B cell (primary cell): ENCODE measurements at regions of chr4 and their contacts with region 1.

Region 1: DNA sequence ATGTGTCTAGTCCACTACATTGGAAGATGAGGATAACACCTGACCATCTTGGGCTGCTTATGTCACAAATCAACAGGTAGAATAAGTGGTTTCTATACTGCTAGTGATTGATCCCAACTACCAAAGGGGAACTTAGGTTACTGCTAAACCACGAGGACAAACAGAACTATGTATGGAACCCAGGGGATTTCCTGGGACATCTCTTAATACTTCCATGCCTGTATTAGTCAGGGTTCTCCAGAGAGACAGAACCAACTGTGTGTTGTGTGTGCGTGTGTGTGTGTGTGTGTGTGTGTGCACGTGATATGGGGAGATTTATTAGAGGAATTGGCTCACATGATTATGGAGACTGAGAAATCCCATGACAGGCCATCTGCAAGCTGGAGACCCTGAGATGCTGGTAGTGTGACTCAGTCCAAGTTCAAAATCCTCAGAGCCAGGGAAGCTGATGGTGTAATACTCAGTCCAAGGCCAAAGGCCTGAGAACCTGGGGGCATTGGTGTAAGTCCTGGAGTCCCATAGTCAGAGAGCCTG is 16.2 kb upstream of the AFF1 start:
- DNase-seq: no peak
- ATAC-seq: no peak
- H3K4me3 ChIP-seq: no peak overlapping the region
- H3K4me3 Mint-ChIP-seq: no peak overlapping the region
- H3K27ac ChIP-seq: no peak overlapping the region
- H3K27ac Mint-ChIP-seq: no peak overlapping the region
- H3K4me1 ChIP-seq: peaks cover 0 to 2% of the 10 kb centered on the region in 2 donors
- H3K4me1 Mint-ChIP-seq: no peaks in the 10 kb centered on the region
- H3K27me3 ChIP-seq: no peaks in the 10 kb centered on the region
- H3K27me3 Mint-ChIP-seq: no peaks in the 10 kb centered on the region
- CTCF ChIP-seq: no peak

Region 2: DNA sequence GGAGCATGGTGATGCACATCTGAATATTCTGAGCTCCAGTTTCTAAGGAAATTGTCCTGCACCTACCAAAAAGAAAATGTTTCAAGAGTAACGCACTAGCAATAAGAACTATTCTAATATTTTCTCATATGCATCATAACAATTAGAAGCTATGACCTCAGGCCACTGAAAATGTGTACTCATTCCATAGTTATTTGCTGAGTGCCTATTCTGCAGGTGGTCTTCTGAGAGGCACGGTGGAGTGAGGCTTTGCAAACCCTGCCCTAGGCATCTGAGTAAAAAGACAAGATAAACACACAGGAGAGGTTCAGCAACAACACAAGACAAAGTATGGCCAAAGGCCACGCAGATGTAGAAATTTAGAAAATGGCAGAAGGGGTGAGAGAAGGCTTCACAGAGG is 93.1 kb before region 1 on chr4:
- CTCF ChIA-PET with region 1: no interaction called
- POLR2A ChIA-PET with region 1: no interaction called
- intact Hi-C with region 1: no loop called
- DNase-seq: no peak
- ATAC-seq: no peak
- H3K4me3 ChIP-seq: no peak overlapping the region
- H3K4me3 Mint-ChIP-seq: no peak overlapping the region
- H3K27ac ChIP-seq: no peak overlapping the region
- H3K27ac Mint-ChIP-seq: no peak overlapping the region
- H3K4me1 ChIP-seq: no peaks in the 10 kb centered on the region
- H3K4me1 Mint-ChIP-seq: no peaks in the 10 kb centered on the region
- H3K27me3 ChIP-seq: no peaks in the 10 kb centered on the region
- H3K27me3 Mint-ChIP-seq: peaks cover 8% of the 10 kb centered on the region
- CTCF ChIP-seq: no peak

Region 3: GRCh38 chr4:86848732-86849619 is 69.6 kb before region 1 on chr4 and contains the start of gene SLC10A6:
- CTCF ChIA-PET with region 1: no interaction called
- POLR2A ChIA-PET with region 1: no interaction called
- intact Hi-C with region 1: no loop called
- DNase-seq: no peak
- ATAC-seq: no peak
- H3K4me3 ChIP-seq: no peak within 1 kb of the TSS
- H3K4me3 Mint-ChIP-seq: no peak within 1 kb of the TSS
- H3K27ac ChIP-seq: no peak within 1 kb of the TSS
- H3K27ac Mint-ChIP-seq: no peak within 1 kb of the TSS
- H3K4me1 ChIP-seq: no peaks in the 10 kb centered on the region
- H3K4me1 Mint-ChIP-seq: no peaks in the 10 kb centered on the region
- H3K27me3 ChIP-seq: no peaks in the 10 kb centered on the region
- H3K27me3 Mint-ChIP-seq: no peaks in the 10 kb centered on the region
- CTCF ChIP-seq: no peak
- total RNA-seq, gene SLC10A6: not detected in 2 replicates

Region 4: DNA sequence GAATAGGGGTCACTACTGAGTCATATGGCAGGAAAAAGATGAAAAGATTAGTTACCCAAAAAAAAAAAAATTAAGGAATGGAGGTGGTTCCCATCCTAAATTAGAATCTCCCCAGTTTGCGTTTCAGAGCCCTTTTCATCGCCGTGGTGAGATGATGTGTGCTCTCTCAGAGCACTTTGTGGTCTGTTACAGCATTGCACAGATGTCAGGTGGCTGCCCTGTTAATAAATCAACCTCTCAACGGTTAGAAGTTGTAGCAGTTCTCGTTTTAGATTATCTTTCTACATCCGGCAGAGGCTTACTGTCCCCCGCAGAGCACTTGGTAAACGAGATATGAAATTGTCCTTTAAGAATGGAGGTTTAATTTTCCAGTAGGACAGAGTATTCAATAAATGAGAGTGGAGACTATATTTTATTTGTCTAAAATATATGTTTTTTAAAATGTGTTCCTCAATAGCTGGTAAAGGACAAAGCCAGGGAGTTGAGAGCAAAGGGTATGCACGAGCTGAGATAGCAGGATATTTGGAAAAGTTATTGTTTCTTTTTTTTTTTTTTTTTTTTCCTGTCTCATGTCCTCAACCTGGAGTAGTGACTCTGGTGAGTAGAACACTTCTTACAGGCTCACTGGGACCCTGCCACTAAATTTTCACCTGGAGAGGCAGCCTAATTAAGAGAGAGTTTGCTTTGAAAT is 43.1 kb after region 1 on chr4:
- CTCF ChIA-PET with region 1: interaction called, 20 read pairs
- POLR2A ChIA-PET with region 1: no interaction called
- intact Hi-C with region 1: no loop called
- DNase-seq: peak; percentile 72
- ATAC-seq: peak; percentile 89
- H3K4me3 ChIP-seq: peak overlapping the region in 2 of 5 experiments; percentile 5 to 20
- H3K4me3 Mint-ChIP-seq: peak overlapping the region; percentile 52
- H3K27ac ChIP-seq: peak overlapping the region; percentile 54 to 73
- H3K27ac Mint-ChIP-seq: peak overlapping the region; percentile 22
- H3K4me1 ChIP-seq: peaks cover 59 to 65% of the 10 kb centered on the region in 2 donors
- H3K4me1 Mint-ChIP-seq: peaks cover 48% of the 10 kb centered on the region
- H3K27me3 ChIP-seq: no peaks in the 10 kb centered on the region
- H3K27me3 Mint-ChIP-seq: no peaks in the 10 kb centered on the region
- CTCF ChIP-seq: no peak

Region 5: GRCh38 chr4:86999136-86999643 is 80.6 kb after region 1 on chr4:
- CTCF ChIA-PET with region 1: interaction called, 93 read pairs
- POLR2A ChIA-PET with region 1: interaction called, 3 read pairs
- intact Hi-C with region 1: no loop called
- DNase-seq: no peak
- ATAC-seq: no peak
- H3K4me3 ChIP-seq: no peak overlapping the region
- H3K4me3 Mint-ChIP-seq: peak overlapping the region; percentile 57
- H3K27ac ChIP-seq: no peak overlapping the region
- H3K27ac Mint-ChIP-seq: peak overlapping the region; percentile 54
- H3K4me1 ChIP-seq: peaks cover 37 to 39% of the 10 kb centered on the region in 2 donors
- H3K4me1 Mint-ChIP-seq: peaks cover 43% of the 10 kb centered on the region
- H3K27me3 ChIP-seq: no peaks in the 10 kb centered on the region
- H3K27me3 Mint-ChIP-seq: no peaks in the 10 kb centered on the region
- CTCF ChIP-seq: no peak

Region 6: GRCh38 chr4:87026800-87027495 is 108.3 kb after region 1 on chr4:
- CTCF ChIA-PET with region 1: interaction called, 15 read pairs
- POLR2A ChIA-PET with region 1: interaction called, 4 read pairs
- intact Hi-C with region 1: no loop called
- DNase-seq: peak; percentile 82
- ATAC-seq: peak; percentile 96
- H3K4me3 ChIP-seq: no peak overlapping the region
- H3K4me3 Mint-ChIP-seq: peak overlapping the region; percentile 52
- H3K27ac ChIP-seq: peak overlapping the region; percentile 48 to 78
- H3K27ac Mint-ChIP-seq: peak overlapping the region; percentile 80
- H3K4me1 ChIP-seq: peaks cover 40 to 61% of the 10 kb centered on the region in 2 donors
- H3K4me1 Mint-ChIP-seq: peaks cover 52% of the 10 kb centered on the region
- H3K27me3 ChIP-seq: no peaks in the 10 kb centered on the region
- H3K27me3 Mint-ChIP-seq: no peaks in the 10 kb centered on the region
- CTCF ChIP-seq: no peak

Region 7: DNA sequence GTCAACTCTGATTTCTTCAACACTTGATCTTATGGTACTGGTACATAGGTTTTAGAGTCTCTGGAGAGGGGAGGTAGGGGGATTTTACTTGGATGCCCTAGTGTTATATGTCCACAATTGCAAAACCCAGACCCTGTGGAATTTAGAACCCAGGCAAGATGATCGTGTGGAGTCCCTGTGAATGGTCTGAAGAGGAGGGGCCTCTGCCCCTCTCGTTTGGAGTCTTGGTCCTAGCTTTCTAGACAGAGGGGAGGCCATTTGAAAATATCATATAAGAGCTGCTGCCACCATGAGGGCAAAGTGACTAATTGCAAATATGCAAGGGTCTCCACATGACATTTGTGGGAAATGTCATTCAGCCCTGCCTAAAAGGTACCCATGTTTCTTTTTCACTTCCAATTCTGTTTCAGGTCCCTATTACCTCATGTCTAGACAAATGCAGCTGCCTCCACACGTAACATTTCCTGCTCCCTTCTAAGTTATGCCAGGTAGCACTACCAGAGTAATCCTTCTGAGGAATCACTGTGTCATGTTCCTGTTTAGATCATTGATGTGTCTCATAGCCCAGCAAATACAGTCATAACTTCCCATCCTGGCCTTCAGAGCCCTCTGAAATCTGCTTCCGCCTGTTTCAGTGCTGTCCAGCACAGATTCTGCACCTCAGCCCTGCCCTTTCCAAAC is 175.0 kb after region 1 on chr4:
- CTCF ChIA-PET with region 1: interaction called, 390 read pairs
- POLR2A ChIA-PET with region 1: interaction called, 14 read pairs
- intact Hi-C with region 1: loop called (anchors 1 kb)
- DNase-seq: peak; percentile 75
- ATAC-seq: peak; percentile 84
- H3K4me3 ChIP-seq: no peak overlapping the region
- H3K4me3 Mint-ChIP-seq: no peak overlapping the region
- H3K27ac ChIP-seq: peak overlapping the region in 1 of 2 donors; percentile 32
- H3K27ac Mint-ChIP-seq: peak overlapping the region; percentile 77
- H3K4me1 ChIP-seq: peaks cover 10 to 14% of the 10 kb centered on the region in 2 donors
- H3K4me1 Mint-ChIP-seq: peaks cover 21% of the 10 kb centered on the region
- H3K27me3 ChIP-seq: no peaks in the 10 kb centered on the region
- H3K27me3 Mint-ChIP-seq: no peaks in the 10 kb centered on the region
- CTCF ChIP-seq: peak; percentile 80

Region 8: GRCh38 chr4:87114245-87115062 is 195.8 kb after region 1 on chr4:
- CTCF ChIA-PET with region 1: interaction called, 37 read pairs
- POLR2A ChIA-PET with region 1: no interaction called
- intact Hi-C with region 1: no loop called
- DNase-seq: no peak
- ATAC-seq: no peak
- H3K4me3 ChIP-seq: no peak overlapping the region
- H3K4me3 Mint-ChIP-seq: no peak overlapping the region
- H3K27ac ChIP-seq: no peak overlapping the region
- H3K27ac Mint-ChIP-seq: no peak overlapping the region
- H3K4me1 ChIP-seq: no peaks in the 10 kb centered on the region
- H3K4me1 Mint-ChIP-seq: peaks cover 2% of the 10 kb centered on the region
- H3K27me3 ChIP-seq: no peaks in the 10 kb centered on the region
- H3K27me3 Mint-ChIP-seq: no peaks in the 10 kb centered on the region
- CTCF ChIP-seq: no peak

Region 9: DNA sequence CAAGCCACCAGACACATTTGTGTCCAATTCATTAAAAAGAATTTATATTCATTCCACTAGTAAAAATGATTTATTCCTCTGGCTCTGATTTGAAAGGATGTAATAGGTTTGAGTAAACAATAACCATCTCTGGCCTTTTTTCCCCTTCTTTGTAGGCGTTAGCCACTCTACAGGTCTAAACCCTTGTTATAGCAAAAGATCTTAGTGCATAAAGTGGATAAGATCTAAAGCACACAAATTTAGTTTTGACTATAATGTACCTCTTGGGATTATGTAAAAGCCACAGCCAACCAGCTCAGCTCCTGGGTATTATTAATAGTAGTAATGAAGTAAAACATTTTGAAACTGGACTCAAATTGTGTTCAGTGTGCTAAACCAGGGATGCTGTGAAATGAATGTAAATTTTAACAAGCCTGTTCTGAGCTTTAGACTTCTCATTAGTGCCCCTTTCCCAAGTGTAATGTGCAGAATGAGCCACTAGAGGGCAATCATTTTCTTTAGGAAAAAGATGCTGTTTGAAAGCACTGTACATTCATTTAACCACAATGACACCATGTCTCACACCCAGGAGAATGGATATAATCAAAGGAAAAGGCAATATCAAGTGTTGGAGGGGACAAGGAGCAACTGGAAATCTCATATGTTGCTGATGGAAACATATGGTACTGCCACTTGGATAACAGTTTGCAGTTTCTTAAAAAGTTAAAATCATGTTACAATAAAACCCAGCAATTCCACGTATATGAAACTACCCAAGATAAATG is 232.1 kb after region 1 on chr4:
- CTCF ChIA-PET with region 1: interaction called, 35 read pairs
- POLR2A ChIA-PET with region 1: no interaction called
- intact Hi-C with region 1: loop called (anchors 2 kb)
- DNase-seq: peak; percentile 76
- ATAC-seq: peak; percentile 86
- H3K4me3 ChIP-seq: no peak overlapping the region
- H3K4me3 Mint-ChIP-seq: no peak overlapping the region
- H3K27ac ChIP-seq: no peak overlapping the region
- H3K27ac Mint-ChIP-seq: no peak overlapping the region
- H3K4me1 ChIP-seq: no peaks in the 10 kb centered on the region
- H3K4me1 Mint-ChIP-seq: no peaks in the 10 kb centered on the region
- H3K27me3 ChIP-seq: no peaks in the 10 kb centered on the region
- H3K27me3 Mint-ChIP-seq: no peaks in the 10 kb centered on the region
- CTCF ChIP-seq: peak; percentile 96